ENCODE measurements at regions of chr12 and their contacts with region 1.

Region 1: DNA sequence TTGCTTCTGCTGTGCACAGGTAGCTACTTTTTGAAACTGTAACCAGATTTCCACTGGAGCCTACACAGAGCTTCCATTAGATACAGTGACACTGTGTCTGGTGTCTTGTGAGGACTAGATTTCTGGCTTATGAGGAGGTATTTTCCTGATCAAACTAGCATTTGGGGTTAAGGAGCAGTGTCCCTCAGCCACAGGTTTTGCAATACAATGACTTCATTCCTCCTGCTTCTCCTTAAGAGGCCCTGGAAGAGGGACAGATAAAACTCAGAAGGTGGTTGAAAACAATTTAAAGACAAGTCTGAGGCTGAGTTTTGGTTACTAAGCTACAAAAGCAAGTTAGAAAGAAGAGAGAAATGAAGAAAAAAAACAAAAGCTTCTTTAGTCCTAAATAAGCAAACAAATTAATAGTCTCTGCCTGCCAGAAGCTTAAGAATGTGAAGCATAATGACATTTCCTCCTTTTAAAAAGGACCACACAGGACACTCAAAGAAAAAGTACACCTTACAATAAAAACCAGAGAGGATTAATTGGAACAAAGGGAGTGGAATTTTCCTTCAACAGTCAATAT is 53.0 kb downstream of the PKP2 start:
- DNase-seq: no peak
- ATAC-seq: no peak
- H3K4me3 ChIP-seq: no peak overlapping the region
- H3K27ac ChIP-seq: no peak overlapping the region
- H3K4me1 ChIP-seq: no peaks in the 10 kb centered on the region
- H3K27me3 ChIP-seq: no peaks in the 10 kb centered on the region; a peak in 1 of 4 replicates
- CTCF ChIP-seq: no peak
- EP300 ChIP-seq: no peak
- POLR2A ChIP-seq: no peak
- RAD21 ChIP-seq: no peak

Region 2: DNA sequence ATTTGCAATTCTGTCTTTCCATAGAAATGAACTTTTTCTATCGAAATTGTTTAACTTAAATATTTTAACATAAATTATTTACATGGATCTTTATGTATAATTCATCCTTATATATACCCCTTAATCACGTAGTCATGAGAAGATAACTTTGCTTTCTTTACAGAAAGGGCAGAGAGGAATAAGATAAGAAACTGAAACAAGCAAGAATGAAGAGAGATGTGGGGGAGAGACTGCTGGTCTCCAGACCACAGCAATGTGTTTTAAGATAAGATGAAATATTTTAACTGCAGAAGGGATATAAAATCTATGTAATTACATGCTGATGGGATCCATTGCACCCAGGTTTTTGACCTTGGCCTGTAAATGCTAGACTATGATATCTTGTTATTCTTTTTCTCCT is 199.2 kb before region 1 on chr12:
- CTCF ChIA-PET with region 1: no interaction called
- POLR2A ChIA-PET with region 1: no interaction called
- RAD21 ChIA-PET with region 1: no interaction called
- SMC1A ChIA-PET with region 1: no interaction called
- in situ Hi-C with region 1: no loop called
- intact Hi-C with region 1: no loop called
- DNase-seq: no peak
- ATAC-seq: no peak
- H3K4me3 ChIP-seq: no peak overlapping the region
- H3K27ac ChIP-seq: no peak overlapping the region
- H3K4me1 ChIP-seq: no peaks in the 10 kb centered on the region
- H3K27me3 ChIP-seq: no peaks in the 10 kb centered on the region
- CTCF ChIP-seq: no peak
- EP300 ChIP-seq: no peak
- POLR2A ChIP-seq: no peak
- RAD21 ChIP-seq: no peak

Region 3: DNA sequence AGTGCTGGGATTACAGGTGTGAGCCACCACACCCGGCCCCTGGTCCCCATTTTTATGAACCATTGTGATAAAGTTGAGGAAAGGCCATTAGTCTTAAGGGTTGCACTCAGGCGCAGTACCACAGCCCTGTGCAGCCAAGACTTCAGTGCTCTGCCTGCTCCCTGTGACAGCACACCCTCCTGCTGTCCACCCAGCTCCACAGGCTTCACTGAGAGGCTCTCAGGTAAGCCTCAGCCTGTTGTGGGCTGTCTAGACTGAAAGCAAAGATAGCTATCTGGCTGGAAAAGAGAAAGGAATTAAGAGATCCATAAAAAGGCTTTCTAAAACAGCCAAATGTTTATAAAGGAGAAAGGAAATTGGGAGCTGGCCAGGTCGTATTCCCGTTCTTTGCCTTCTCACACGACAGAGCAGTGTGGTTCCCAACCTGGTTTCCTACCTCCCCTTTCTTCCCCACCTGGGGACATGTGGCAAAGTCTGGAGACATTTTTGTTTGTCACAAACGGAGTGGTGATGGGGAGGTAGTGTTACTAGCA is 183.6 kb before region 1 on chr12:
- CTCF ChIA-PET with region 1: no interaction called
- POLR2A ChIA-PET with region 1: no interaction called
- RAD21 ChIA-PET with region 1: no interaction called
- SMC1A ChIA-PET with region 1: no interaction called
- in situ Hi-C with region 1: no loop called
- intact Hi-C with region 1: no loop called
- DNase-seq: no peak
- ATAC-seq: peak; percentile 37; the same call in 2 of the 3 replicates
- H3K4me3 ChIP-seq: no peak overlapping the region
- H3K27ac ChIP-seq: no peak overlapping the region
- H3K4me1 ChIP-seq: no peaks in the 10 kb centered on the region
- H3K27me3 ChIP-seq: no peaks in the 10 kb centered on the region
- CTCF ChIP-seq: no peak
- EP300 ChIP-seq: no peak
- POLR2A ChIP-seq: no peak
- RAD21 ChIP-seq: no peak

Region 4: DNA sequence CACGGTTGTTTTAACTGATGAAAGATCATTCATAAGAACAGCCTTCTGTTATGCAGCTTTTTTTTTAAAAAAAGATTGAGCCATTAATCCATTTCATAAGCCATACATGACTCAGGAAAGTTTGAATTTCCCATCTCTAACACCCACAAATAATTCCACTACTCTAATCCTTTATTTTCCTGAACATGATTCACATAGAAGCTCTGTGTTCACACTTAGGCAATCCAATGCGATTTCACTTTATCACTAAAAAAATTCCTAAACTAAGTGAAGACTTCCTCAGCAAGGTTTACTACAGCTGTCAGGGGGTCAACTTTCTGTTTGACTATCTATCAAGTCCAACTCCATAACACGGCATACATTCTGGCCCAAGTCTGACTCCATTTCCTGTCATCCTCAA is 27.1 kb after region 1 on chr12:
- CTCF ChIA-PET with region 1: no interaction called
- POLR2A ChIA-PET with region 1: no interaction called
- RAD21 ChIA-PET with region 1: no interaction called
- SMC1A ChIA-PET with region 1: no interaction called
- in situ Hi-C with region 1: no loop called
- intact Hi-C with region 1: loop called (anchors 2 kb)
- DNase-seq: no peak
- ATAC-seq: no peak
- H3K4me3 ChIP-seq: no peak overlapping the region
- H3K27ac ChIP-seq: no peak overlapping the region
- H3K4me1 ChIP-seq: no peaks in the 10 kb centered on the region
- H3K27me3 ChIP-seq: no peaks in the 10 kb centered on the region
- CTCF ChIP-seq: no peak
- EP300 ChIP-seq: no peak
- POLR2A ChIP-seq: no peak
- RAD21 ChIP-seq: no peak